WTC11 (cell line): ENCODE measurements at regions of chr17 and their contacts with region 1.

Region 1: DNA sequence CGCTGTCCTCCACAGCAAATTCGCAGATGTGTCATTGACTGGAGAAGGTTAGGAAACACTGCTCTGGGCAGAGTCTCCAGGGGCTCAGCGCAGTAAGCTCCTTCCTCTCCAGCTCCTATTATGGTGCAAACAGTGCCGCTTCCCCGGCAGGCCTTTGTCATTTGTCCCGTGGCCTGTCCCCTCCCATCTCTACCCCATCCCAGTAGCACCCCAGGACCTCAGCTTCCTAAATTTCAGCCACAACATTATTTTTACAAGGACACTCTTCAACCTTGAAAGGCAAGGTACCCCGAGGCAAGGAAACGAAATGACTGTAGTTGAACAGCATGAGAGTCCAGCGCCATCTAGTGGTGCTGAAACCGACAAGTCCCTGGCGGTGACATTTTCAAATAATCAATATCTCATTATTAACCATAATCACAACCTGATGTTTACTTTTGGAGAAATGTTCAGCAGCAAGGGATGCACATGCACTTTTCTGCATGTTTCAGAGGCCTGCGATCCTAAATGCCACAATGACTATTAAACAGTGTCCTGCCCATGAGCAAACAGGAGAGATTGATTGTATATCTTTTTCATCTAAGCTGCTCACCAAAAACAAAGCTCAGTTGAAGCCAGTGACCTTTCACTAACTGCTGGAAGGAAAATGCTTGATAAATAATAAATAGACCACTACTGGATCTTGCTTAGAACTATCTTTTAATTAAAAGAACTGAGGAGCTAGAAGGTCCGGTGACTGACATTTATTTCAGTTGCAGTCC is 16.5 kb downstream of the MRPS23 start:
- DNase-seq: peak; percentile 69
- ATAC-seq: peak; percentile 81
- H3K4me3 Mint-ChIP-seq: no peak overlapping the region
- H3K27ac Mint-ChIP-seq: no peak overlapping the region
- H3K4me1 Mint-ChIP-seq: peaks cover 16% of the 10 kb centered on the region
- H3K27me3 Mint-ChIP-seq: no peaks in the 10 kb centered on the region
- CTCF ChIP-seq: peak; percentile 91

Region 2: DNA sequence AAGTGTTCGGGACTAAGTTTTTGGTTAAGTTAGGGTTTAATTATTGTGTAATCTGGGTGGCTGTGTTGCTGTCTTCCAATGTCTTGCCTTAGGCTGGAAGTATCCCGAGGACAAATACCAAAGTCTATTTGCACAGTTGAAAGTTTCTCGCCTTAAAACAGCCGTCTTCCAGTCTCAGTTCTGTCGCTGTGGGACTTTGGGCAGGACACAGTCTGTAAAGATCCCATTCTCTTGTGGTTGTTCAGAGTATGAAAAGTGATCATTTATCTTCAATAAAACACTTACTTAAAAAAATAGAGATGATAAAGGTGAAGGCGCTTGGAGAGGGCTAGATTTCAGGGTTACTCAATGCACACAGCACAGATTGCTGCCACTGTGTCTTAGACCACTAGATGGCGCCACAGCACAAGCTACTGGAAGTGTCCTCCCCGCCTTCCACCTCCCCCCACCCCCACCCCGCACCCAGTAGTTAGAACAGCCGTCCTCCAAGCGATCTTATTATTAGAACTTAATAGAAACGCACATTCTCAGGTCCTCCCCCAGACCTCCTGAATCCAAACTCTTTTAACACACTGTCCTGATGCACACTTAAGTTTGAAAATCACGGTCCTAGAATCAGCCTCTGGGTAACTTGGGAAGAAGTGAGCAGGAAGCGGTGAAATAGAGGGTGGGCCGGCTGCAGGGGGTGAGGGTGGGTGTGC is 702.4 kb before region 1 on chr17:
- CTCF ChIA-PET with region 1: interaction called, 16 read pairs
- POLR2A ChIA-PET with region 1: no interaction called
- DNase-seq: peak; percentile 88
- ATAC-seq: peak; percentile 76
- H3K4me3 Mint-ChIP-seq: no peak overlapping the region
- H3K27ac Mint-ChIP-seq: no peak overlapping the region
- H3K4me1 Mint-ChIP-seq: peaks cover 30% of the 10 kb centered on the region
- H3K27me3 Mint-ChIP-seq: no peaks in the 10 kb centered on the region
- CTCF ChIP-seq: peak; percentile 92

Region 3: GRCh38 chr17:57685505-57686132 is 147.7 kb before region 1 on chr17:
- CTCF ChIA-PET with region 1: no interaction called
- POLR2A ChIA-PET with region 1: no interaction called
- DNase-seq: no peak
- ATAC-seq: peak; percentile 66
- H3K4me3 Mint-ChIP-seq: no peak overlapping the region
- H3K27ac Mint-ChIP-seq: no peak overlapping the region
- H3K4me1 Mint-ChIP-seq: peaks cover 31% of the 10 kb centered on the region
- H3K27me3 Mint-ChIP-seq: no peaks in the 10 kb centered on the region
- CTCF ChIP-seq: no peak

Region 4: DNA sequence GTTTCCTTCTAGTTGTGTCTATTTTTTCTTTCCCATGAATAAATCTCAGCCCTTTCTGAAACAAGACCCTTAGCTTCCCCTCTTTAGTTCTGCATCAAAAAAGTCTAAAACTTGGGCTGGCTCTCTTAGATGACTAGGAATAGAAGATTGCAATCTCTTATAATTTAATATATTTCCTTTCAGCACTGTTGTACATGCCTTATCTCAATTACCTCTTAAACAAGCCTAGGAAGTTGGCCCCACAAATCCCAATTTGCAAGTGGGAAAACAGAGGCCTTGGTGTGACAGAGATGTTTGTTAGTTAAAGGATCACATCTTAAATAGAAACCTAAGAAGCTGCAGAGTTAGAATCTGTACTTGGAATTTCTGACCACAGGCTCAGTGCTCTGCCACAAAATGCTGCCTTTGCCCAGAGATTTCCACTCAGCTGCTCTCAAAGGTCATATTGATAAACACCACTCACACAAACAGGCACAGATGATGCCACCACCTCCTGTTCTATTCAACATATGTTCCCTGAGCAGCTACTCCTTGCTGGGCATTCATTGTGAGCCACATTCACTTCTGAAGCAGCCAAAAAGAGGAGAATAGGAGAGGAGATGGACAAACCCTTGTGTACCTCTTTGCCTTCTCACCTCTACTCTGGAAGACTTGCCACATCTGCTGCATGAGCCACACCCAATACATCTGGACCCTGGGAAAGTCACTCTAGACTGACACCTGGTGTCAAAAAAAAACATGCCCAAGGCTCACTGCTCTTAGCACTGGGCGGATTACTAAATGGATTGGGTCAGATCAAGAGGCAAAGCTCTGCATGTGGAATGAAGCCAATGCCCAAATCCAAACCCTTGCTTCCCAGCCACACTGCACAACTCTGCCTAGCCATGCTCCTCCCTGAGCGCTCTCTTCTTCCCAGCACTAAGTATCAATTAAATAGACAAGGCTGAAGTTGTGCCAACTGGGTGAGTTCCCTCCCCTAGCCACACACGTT is 93.7 kb before region 1 on chr17:
- CTCF ChIA-PET with region 1: interaction called, 11 read pairs
- POLR2A ChIA-PET with region 1: no interaction called
- DNase-seq: no peak
- ATAC-seq: peak; percentile 87
- H3K4me3 Mint-ChIP-seq: no peak overlapping the region
- H3K27ac Mint-ChIP-seq: no peak overlapping the region
- H3K4me1 Mint-ChIP-seq: no peaks in the 10 kb centered on the region
- H3K27me3 Mint-ChIP-seq: no peaks in the 10 kb centered on the region
- CTCF ChIP-seq: no peak

Region 5: GRCh38 chr17:57761887-57762286 is 71.5 kb before region 1 on chr17:
- CTCF ChIA-PET with region 1: interaction called, 12 read pairs
- POLR2A ChIA-PET with region 1: no interaction called
- DNase-seq: no peak
- ATAC-seq: peak; percentile 45
- H3K4me3 Mint-ChIP-seq: no peak overlapping the region
- H3K27ac Mint-ChIP-seq: no peak overlapping the region
- H3K4me1 Mint-ChIP-seq: peaks cover 19% of the 10 kb centered on the region
- H3K27me3 Mint-ChIP-seq: peaks cover 6% of the 10 kb centered on the region; the same call in 1 of the 2 replicates
- CTCF ChIP-seq: no peak

Region 6: DNA sequence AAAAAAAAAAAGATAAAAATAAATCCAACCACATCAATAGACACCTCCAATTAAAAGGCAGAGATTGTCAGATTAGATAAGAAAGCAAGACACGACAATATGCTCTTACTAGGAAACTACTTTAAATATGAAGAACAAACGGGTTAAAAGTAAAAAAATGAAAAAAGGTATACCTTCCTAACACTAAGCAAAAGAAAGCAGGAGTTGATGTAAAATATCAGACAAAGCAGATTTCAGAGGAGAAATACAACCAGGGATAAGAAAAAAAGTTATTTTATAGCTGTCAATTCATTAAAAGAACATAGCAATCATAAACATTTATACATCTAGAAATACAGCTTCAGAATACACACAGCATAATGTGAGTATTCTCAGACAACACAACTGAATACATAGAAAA is 38.5 kb before region 1 on chr17:
- CTCF ChIA-PET with region 1: no interaction called
- POLR2A ChIA-PET with region 1: no interaction called
- DNase-seq: no peak
- ATAC-seq: no peak
- H3K4me3 Mint-ChIP-seq: no peak overlapping the region
- H3K27ac Mint-ChIP-seq: no peak overlapping the region
- H3K4me1 Mint-ChIP-seq: no peaks in the 10 kb centered on the region
- H3K27me3 Mint-ChIP-seq: peaks cover 4% of the 10 kb centered on the region; the same call in 1 of the 2 replicates
- CTCF ChIP-seq: no peak

Region 7: DNA sequence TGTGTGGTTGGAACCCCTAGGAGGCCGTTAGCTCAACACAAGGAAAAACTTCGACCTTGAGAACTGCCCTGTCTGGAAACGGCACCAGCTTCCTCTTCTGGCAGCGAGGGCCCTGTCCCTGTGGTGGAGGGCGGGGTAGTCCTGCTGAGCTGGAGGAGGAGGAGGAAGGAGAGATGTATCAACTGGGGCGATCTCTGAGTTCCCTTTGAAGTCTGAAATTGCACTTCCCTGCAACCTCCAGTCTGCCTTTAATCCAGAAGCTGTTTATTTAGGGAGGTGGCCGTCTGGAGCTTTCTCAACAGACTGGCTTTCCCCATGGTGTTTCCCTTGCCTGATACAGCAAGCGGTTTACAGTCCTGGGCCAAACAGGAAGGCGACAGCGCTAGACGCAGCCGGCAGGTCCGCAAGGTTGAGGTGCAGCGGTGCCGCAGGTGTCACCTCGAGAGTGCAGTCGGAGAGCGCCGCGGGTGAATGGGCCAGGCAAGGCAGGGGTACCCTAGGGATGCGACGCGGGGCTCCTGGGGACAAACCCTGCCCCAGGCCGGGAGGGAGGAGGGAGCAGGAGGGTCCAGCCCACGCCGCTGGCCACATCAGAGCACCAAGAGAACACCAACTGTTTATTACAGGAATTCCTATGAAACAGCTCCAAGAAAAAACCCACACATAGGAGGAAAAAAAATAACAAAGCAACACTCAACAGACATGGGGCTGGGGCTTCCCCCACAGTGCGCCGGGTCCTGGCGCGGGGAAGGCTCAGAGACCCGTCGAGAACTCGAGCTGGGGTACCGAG is 27.8 kb after region 1 on chr17:
- CTCF ChIA-PET with region 1: interaction called, 15 read pairs
- POLR2A ChIA-PET with region 1: no interaction called
- DNase-seq: peak; percentile 58
- ATAC-seq: peak; percentile 34
- H3K4me3 Mint-ChIP-seq: peak overlapping the region; percentile 79
- H3K27ac Mint-ChIP-seq: no peak overlapping the region
- H3K4me1 Mint-ChIP-seq: peaks cover 55% of the 10 kb centered on the region
- H3K27me3 Mint-ChIP-seq: peaks cover 40% of the 10 kb centered on the region
- CTCF ChIP-seq: no peak

Region 8: GRCh38 chr17:57995076-57995956 is 162.0 kb after region 1 on chr17:
- CTCF ChIA-PET with region 1: interaction called, 11 read pairs
- POLR2A ChIA-PET with region 1: no interaction called
- DNase-seq: peak; percentile 61
- ATAC-seq: peak; percentile 81
- H3K4me3 Mint-ChIP-seq: no peak overlapping the region
- H3K27ac Mint-ChIP-seq: peak overlapping the region; percentile 52
- H3K4me1 Mint-ChIP-seq: peaks cover 51% of the 10 kb centered on the region
- H3K27me3 Mint-ChIP-seq: no peaks in the 10 kb centered on the region
- CTCF ChIP-seq: peak; percentile 50; the same call in 1 of the 2 replicates